ENCODE measurements at regions of chr17 and their contacts with region 1.

Region 1: GRCh38 chr17:64320613-64321553 is 57.8 kb upstream of the TEX2 start:
- DNase-seq: peak; percentile 21
- ATAC-seq: no peak
- H3K4me3 Mint-ChIP-seq: peak overlapping the region; percentile 55
- H3K27ac Mint-ChIP-seq: no peak overlapping the region
- H3K4me1 Mint-ChIP-seq: peaks cover 43% of the 10 kb centered on the region
- H3K27me3 Mint-ChIP-seq: peaks cover 2% of the 10 kb centered on the region
- CTCF ChIP-seq: no peak

Region 2: DNA sequence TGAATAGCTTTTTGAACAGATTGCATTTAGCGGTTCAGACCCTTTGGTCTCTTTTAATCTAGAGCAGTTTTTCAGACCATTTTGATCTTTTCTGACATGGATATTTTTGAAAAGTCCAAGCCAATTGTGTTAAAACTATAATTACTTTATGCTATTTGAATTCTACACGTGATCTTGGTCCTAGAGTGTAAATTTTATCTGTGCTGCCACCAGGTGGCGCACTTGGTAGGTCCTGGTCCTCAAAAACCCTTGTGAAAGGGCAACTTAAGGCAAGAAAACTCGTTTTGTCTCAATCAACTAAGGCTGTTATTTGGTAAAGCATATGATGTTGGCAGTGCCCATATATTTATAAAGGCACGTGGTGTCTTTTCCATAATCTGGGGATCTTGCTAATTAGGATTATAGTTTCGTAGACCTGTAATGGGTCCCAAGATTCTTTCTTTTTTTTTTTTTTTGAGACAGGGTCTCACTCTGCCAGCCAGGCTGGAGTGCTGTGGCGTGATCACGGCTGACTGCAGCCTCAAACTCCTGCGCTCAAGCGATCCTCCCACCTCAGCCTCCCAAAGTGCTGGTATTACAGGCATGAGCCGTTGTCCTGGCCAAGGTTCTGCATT is 13.9 kb before region 1 on chr17:
- CTCF ChIA-PET with region 1: interaction called, 7 read pairs
- POLR2A ChIA-PET with region 1: interaction called, 6 read pairs
- intact Hi-C with region 1: loop called (anchors 1 kb)
- DNase-seq: peak; percentile 50
- ATAC-seq: peak; percentile 58
- H3K4me3 Mint-ChIP-seq: no peak overlapping the region
- H3K27ac Mint-ChIP-seq: no peak overlapping the region
- H3K4me1 Mint-ChIP-seq: no peaks in the 10 kb centered on the region
- H3K27me3 Mint-ChIP-seq: no peaks in the 10 kb centered on the region
- CTCF ChIP-seq: peak; percentile 76

Measured in activated B cell treated with CpG ODN at 0.5 μM for 24 hours (primary cell).